ENCODE measurements at regions of chr20 and their contacts with region 1.

Region 1: GRCh38 chr20:22106308-22106938 is 401.0 kb downstream of the PAX1 start:
- DNase-seq: no peak
- H3K4me3 Mint-ChIP-seq: no peak overlapping the region
- H3K27ac Mint-ChIP-seq: no peak overlapping the region
- H3K4me1 Mint-ChIP-seq: no peaks in the 10 kb centered on the region
- H3K27me3 Mint-ChIP-seq: no peaks in the 10 kb centered on the region

Region 2: DNA sequence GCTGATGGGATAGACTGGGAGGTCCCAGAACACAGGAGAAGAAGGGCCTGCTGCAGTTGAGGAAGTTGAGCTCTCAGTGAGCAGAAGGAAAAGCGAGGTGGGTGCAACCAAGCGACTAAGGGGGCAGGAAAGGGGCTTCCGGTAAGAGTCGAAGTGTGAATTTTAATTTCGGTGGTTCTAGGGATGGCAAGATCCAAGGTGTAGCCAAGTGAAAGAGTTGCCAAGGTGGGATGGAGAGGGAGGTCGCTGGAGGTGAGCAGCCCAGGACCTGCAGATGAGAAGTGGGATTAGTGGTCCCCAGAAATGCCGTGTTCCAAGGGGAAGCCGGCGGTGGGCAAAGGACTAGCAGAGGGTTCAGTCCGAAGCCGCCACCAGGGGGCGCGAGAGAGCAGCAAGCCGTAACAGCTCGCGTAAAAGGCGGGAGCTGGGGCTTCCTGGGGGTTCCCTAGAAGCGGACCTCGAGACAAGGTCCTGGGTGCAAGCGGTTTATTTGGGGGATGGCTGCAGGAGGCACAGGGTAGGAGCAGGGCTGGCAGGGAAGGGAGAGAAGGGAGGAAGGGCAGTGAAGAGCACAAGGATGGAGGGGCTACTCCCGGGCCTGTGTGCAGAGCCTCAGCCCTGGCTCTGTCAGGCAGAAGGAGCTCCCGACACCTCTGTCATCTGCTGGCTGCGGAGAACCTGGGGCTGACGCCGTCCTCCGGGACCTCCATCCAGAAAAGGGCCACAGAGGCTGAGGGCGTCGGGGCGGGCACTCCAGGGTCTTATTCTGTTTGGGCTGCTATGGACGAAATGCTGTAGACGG is 297.4 kb before region 1 on chr20:
- CTCF ChIA-PET with region 1: no interaction called
- intact Hi-C with region 1: loop called (anchors 5 kb)
- DNase-seq: peak; percentile 54
- H3K4me3 Mint-ChIP-seq: no peak overlapping the region
- H3K27ac Mint-ChIP-seq: no peak overlapping the region
- H3K4me1 Mint-ChIP-seq: no peaks in the 10 kb centered on the region
- H3K27me3 Mint-ChIP-seq: peaks cover 4% of the 10 kb centered on the region

Measured in activated naive CD4-positive, alpha-beta T cell treated with anti-CD3 and anti-CD28 coated beads for 36 hours (primary cell).